ENCODE measurements at regions of chr2 and their contacts with region 1.

Region 1: GRCh38 chr2:118882709-118883210 is 35.3 kb upstream of the EN1 start:
- DNase-seq: peak in 9 of 10 donors; percentile 27 to 93 (median 63)

Region 2: GRCh38 chr2:118686369-118686768 is 196.4 kb before region 1 on chr2:
- intact Hi-C with region 1: no loop called
- DNase-seq: no peak

Region 3: GRCh38 chr2:119174216-119175037 is 291.7 kb after region 1 on chr2:
- intact Hi-C with region 1: loop called (anchors 10 kb)
- DNase-seq: peak in 7 of 10 donors; percentile 18 to 88 (median 49)

Region 4: GRCh38 chr2:119305497-119306195 is 422.9 kb after region 1 on chr2:
- intact Hi-C with region 1: loop called (anchors 5 kb)
- DNase-seq: no peak

Region 5: GRCh38 chr2:119476301-119477021 is 593.7 kb after region 1 on chr2:
- intact Hi-C with region 1: loop called (anchors 5 kb)
- DNase-seq: peak in 7 of 10 donors; percentile 37 to 94 (median 62)

Measured in posterior cingulate gyrus (tissue), 11 donors.